Endothelial cell of umbilical vein (primary cell): ENCODE measurements at regions of chr5 and their contacts with region 1.

Region 1: GRCh38 chr5:160439205-160439600 is 17.5 kb downstream of the PTTG1 start:
- DNase-seq: peak; percentile 91
- H3K4me3 ChIP-seq: peak overlapping the region in 2 of 3 experiments; percentile 30 to 34
- H3K27ac ChIP-seq: no peak overlapping the region
- H3K4me1 ChIP-seq: peaks cover 10% of the 10 kb centered on the region
- H3K27me3 ChIP-seq: peaks cover 0 to 6% of the 10 kb centered on the region in 2 experiments
- CTCF ChIP-seq: peak; percentile 86 to 90
- POLR2A ChIP-seq: no peak

Region 2: DNA sequence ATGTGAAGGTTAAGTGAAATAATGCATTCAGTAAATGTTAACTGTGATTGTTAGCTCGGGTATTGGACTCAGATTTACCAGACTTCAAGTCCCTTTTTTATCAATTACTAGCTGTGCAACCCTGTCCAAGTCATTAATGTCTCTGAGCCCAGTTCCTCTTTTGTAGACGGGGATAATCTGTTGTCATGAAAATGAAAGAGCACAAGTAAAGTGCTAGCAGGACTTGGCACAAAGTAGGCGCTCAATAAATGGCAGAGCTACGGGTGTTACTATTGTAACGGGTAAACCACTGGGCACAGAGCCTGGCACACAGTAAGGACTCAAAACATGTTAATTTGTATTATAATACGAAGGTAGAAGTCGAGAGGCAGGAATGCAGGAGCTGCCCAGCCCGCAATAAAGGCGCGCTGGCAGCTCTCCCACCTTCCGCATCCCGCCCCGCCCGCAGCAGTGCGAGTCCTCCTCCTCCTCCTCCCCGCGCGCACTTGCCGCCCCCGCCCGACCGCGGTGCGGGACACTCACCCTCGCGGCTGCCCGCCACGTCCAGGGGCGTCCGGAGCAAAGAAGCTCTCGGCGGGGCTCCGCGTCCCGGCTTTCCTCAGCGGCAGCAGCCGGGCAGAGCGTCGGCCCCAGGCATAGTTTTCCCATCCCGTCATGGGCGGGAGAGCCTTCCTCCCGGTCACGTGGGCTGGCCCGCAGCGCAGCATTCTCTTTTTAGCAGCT is 69.1 kb before region 1 on chr5 and contains the start of gene C1QTNF2:
- CTCF ChIA-PET with region 1: no interaction called
- POLR2A ChIA-PET with region 1: no interaction called
- dilution Hi-C with region 1: no loop called
- intact Hi-C with region 1: no loop called
- DNase-seq: peak; percentile 44
- H3K4me3 ChIP-seq: peak within 1 kb of the TSS; percentile 42 to 63 (median 46)
- H3K27ac ChIP-seq: no peak within 1 kb of the TSS
- H3K4me1 ChIP-seq: peaks cover 7% of the 10 kb centered on the region
- H3K27me3 ChIP-seq: peaks cover 50 to 56% of the 10 kb centered on the region in 2 experiments
- CTCF ChIP-seq: no peak
- POLR2A ChIP-seq: no peak
- total RNA-seq, gene C1QTNF2: 0.53 TPM in 1 of 2 replicates, not detected in the other

Region 3: GRCh38 chr5:160427607-160428006 is 11.6 kb before region 1 on chr5:
- CTCF ChIA-PET with region 1: interaction called, 54 read pairs
- POLR2A ChIA-PET with region 1: no interaction called
- dilution Hi-C with region 1: no loop called
- intact Hi-C with region 1: no loop called
- DNase-seq: no peak
- H3K4me3 ChIP-seq: no peak overlapping the region
- H3K27ac ChIP-seq: no peak overlapping the region
- H3K4me1 ChIP-seq: peaks cover 32% of the 10 kb centered on the region
- H3K27me3 ChIP-seq: no peaks in the 10 kb centered on the region
- CTCF ChIP-seq: no peak
- POLR2A ChIP-seq: no peak

Region 4: GRCh38 chr5:160458806-160459800 is 19.9 kb after region 1 on chr5:
- CTCF ChIA-PET with region 1: interaction called, 113 read pairs
- POLR2A ChIA-PET with region 1: no interaction called
- dilution Hi-C with region 1: no loop called
- intact Hi-C with region 1: loop called (anchors 1 kb)
- DNase-seq: no peak
- H3K4me3 ChIP-seq: no peak overlapping the region
- H3K27ac ChIP-seq: no peak overlapping the region
- H3K4me1 ChIP-seq: peaks cover 10% of the 10 kb centered on the region
- H3K27me3 ChIP-seq: no peaks in the 10 kb centered on the region
- CTCF ChIP-seq: no peak
- POLR2A ChIP-seq: no peak

Region 5: GRCh38 chr5:160479926-160480325 is 40.7 kb after region 1 on chr5:
- CTCF ChIA-PET with region 1: interaction called, 46 read pairs
- POLR2A ChIA-PET with region 1: no interaction called
- dilution Hi-C with region 1: no loop called
- intact Hi-C with region 1: no loop called
- DNase-seq: peak; percentile 47
- H3K4me3 ChIP-seq: no peak overlapping the region
- H3K27ac ChIP-seq: peak overlapping the region; percentile 84
- H3K4me1 ChIP-seq: peaks cover 41% of the 10 kb centered on the region
- H3K27me3 ChIP-seq: no peaks in the 10 kb centered on the region
- CTCF ChIP-seq: no peak
- POLR2A ChIP-seq: no peak

Region 6: GRCh38 chr5:160627921-160628618 is 188.9 kb after region 1 on chr5:
- CTCF ChIA-PET with region 1: no interaction called
- POLR2A ChIA-PET with region 1: no interaction called
- dilution Hi-C with region 1: no loop called
- intact Hi-C with region 1: loop called (anchors 5 kb)
- DNase-seq: no peak
- H3K4me3 ChIP-seq: no peak overlapping the region
- H3K27ac ChIP-seq: no peak overlapping the region
- H3K4me1 ChIP-seq: no peaks in the 10 kb centered on the region
- H3K27me3 ChIP-seq: no peaks in the 10 kb centered on the region
- CTCF ChIP-seq: no peak
- POLR2A ChIP-seq: no peak